Colonic mucosa (tissue), 4 donors: ENCODE measurements at regions of chr14 and their contacts with region 1.

Region 1: DNA sequence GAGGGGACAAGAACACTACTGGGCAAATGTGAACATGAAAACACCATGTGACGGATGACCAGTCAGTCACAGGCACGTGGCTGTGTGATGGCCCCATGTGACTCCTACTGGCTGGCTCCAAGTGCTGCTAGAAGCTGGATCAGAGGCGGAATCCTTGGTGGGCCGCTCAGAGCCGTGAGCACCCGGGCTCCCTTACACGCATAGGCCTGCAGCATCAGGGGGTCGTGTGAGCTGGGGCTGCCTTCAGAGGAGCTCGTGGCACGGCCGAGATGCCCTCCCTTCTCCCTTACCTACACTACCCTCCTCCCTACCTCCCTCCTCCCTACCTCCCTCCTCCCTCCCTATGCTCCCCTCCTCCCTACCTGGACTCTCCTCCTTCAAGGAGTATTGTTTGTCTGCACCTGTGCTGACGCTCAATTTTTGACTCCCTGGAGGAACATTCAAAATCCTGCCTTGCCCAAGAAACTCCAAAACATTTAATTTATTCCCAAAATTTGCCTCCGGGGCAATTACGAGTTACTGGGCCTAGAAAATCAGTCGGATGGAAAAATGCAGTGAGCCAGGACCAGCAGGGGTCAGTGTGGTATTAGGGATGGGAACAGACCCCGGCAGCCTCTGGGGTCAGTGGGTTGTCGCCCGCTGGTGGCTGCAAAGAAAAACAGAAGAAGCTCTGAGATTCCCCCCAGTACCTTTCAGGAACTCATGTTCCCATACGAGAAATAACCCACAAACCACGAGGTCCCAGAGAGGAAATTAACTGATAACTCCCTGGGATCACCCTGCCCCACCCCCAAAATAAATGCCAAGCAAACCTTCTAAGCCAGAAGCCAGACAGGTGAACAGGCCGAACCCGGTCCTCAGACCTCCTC is 61.2 kb downstream of the C14orf132 start:
- DNase-seq: peak; percentile 85
- H3K4me3 ChIP-seq: no peak overlapping the region
- H3K27ac ChIP-seq: no peak overlapping the region
- H3K4me1 ChIP-seq: no peaks in the 10 kb centered on the region
- H3K27me3 ChIP-seq: no peaks in the 10 kb centered on the region
- CTCF ChIP-seq: peak; percentile 77

Region 2: DNA sequence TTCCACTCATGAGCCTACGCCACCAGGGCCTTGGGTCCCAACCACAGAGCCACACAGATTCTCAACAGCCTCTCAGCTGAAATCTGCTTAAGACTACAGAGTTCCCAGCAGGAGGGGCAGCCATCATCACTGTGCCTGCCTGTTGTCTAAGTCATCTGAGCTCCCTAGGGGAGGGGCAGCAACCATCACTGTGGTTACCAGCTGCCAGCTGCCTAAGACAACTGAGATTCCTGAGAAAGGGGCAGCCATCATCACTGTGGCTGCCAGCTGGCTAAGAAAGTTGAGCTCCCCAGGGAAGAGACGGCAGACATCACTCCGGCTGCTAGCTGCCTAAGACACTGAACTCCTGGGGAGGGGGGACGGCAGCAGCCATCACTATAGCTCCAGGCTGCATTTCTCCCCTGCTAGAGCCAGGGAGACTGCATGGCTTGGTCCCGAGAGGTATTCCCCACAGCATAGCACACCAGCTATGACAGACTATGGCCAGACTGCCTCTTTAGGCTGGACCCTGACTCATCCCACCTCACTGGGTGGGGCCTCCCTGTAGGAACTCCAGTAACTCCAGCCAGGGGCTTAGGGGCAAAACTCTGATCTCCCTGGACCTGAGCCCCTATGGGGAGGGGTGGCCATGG is 98.4 kb before region 1 on chr14:
- intact Hi-C with region 1: loop called (anchors 2 kb)
- DNase-seq: no peak
- H3K4me3 ChIP-seq: no peak overlapping the region
- H3K27ac ChIP-seq: no peak overlapping the region
- H3K4me1 ChIP-seq: no peaks in the 10 kb centered on the region
- H3K27me3 ChIP-seq: no peaks in the 10 kb centered on the region
- CTCF ChIP-seq: no peak

Region 3: DNA sequence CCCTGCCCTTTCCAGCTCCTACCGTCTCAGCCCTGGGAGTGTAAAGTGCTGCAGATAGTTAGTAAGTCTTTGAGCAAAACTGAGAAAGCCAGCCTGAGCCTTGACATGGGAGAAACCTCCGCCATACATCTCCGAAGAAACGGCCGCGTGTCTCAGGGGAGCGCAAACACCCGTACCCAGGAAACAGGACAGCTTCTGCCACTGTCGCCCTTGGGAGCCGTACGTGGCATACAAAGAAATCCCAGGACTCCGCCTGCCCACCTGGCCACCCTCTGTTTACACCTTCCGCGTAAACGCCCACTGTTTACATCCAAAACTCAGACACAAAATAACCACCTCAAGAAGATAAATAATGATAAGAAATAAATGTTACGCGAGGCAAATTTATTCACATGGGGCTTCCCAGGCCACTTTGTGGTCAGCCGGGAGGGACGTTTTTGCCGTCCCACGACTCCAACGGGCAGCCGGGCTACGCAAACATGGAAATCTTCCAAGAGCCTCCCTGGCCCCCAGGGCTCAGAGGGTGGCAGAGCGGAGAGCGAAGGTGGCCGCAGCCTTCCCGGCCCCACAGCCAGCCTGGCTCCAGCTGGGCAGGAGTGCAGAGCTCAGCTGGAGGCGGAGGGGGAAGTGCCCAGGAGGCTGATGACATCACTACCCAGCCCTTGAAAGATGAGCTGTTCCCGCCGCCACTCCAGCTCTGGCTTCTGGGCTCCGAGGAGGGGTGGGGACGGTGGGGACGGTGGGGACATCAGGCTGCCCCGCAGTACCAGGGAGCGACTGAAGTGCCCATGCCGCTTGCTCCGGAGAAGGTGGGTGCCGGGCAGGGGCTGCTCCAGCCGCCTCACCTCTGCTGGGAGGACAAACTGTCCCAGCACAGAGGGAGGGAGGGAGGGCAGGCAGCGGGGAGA is 104.0 kb after region 1 on chr14 and contains the start of gene BDKRB2:
- intact Hi-C with region 1: loop called (anchors 10 kb)
- DNase-seq: peak; percentile 86
- H3K4me3 ChIP-seq: peak within 1 kb of the TSS; percentile 57
- H3K27ac ChIP-seq: peak within 1 kb of the TSS; percentile 85
- H3K4me1 ChIP-seq: no peaks in the 10 kb centered on the region
- H3K27me3 ChIP-seq: no peaks in the 10 kb centered on the region
- CTCF ChIP-seq: no peak
- total RNA-seq, gene BDKRB2: 11.3 to 23.3 TPM

Region 4: GRCh38 chr14:96275177-96276112 is 175.1 kb after region 1 on chr14:
- intact Hi-C with region 1: loop called (anchors 2 kb)
- DNase-seq: peak; percentile 80
- H3K4me3 ChIP-seq: no peak overlapping the region
- H3K27ac ChIP-seq: no peak overlapping the region
- H3K4me1 ChIP-seq: no peaks in the 10 kb centered on the region
- H3K27me3 ChIP-seq: no peaks in the 10 kb centered on the region
- CTCF ChIP-seq: peak; percentile 94

Region 5: DNA sequence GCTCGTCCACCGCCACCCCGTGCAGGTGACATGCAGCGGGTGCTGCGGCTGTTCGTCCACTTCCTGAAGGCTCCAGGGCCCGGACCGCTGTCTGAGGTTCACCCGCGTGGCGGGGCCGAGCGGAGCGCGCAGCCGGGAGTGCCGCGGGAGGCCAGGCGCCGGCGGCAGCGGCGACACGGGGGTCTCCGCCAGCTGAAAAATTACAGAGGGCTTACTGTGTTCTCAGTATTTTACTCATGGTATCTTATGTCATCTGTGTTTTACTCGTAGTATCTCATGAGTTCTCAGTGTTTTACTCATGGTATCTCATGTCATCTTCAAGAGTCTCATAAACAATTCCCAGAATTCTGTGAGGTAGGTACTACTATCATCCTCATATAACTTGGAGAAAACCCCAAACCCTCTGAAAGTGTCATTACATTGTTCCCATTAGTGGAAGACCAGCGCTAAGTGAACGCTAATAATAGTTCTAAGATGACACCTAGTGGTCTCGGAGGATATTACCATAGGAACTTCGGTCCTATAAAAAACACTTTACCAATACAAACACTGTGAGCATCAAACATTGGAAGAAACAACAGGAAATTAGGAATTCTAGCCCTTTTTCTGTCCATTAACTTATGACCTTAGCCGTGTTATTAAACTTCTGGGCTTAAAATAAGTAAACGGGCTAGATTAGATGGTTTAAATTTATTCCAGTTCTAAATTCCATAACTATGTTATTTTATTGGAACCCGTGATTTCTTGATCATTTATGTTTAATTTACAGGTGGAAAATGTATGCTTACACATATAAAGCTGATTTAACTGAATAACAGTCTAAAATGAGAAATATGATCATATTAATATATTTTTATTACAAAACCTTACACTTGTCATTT is 324.0 kb after region 1 on chr14:
- intact Hi-C with region 1: loop called (anchors 10 kb)
- DNase-seq: peak; percentile 45
- H3K4me3 ChIP-seq: peak overlapping the region; percentile 44
- H3K27ac ChIP-seq: no peak overlapping the region
- H3K4me1 ChIP-seq: no peaks in the 10 kb centered on the region
- H3K27me3 ChIP-seq: no peaks in the 10 kb centered on the region
- CTCF ChIP-seq: peak; percentile 73

Region 6: DNA sequence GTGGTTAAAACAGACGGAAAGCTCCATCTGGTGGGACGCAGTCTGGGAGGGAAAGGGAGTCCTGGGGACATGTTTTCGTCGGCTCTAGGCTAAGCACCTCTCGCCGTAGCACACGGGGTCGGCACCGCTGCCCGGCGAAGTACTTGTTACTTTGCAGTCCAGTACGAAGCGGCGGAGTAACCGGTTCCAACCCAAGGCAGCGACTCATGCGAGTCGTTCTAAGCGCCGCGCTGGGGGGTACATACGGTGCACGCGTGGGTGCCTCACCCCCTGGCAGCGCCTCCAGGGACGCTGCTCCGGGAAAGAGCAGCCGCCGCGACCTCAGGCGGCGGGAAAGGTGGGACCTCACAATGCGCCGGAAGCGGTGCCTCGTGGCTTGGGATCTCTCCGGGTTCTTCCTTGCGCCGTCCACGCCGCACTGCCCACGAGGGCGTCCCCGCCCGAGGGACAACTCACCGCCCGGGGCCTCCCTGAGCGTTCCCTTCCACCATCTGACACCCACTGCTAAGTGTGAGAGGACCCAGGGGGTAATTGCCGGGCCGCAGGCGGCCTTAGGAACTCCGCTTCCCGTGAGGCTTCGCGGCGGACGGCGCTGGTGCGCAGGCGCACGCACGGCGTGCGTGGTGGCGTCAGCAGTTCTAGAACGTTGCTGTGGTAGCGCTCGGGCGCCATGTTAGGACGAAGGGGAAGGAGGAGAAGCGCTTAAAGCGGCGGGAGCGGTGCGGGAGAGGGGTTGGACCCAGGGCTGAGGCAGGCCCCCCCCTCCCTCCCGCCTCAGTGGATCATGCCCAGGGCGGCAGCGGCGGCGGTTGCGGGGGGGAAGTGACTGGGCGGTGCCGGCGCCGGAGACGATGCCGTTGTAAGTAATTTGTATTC is 401.6 kb after region 1 on chr14 and contains the start of gene PAPOLA:
- intact Hi-C with region 1: loop called (anchors 5 kb)
- DNase-seq: peak; percentile 95
- H3K4me3 ChIP-seq: peak within 1 kb of the TSS; percentile 83
- H3K27ac ChIP-seq: peak within 1 kb of the TSS; percentile 92
- H3K4me1 ChIP-seq: peaks cover 10% of the 10 kb centered on the region
- H3K27me3 ChIP-seq: no peaks in the 10 kb centered on the region
- CTCF ChIP-seq: no peak
- total RNA-seq, gene PAPOLA: 176 to 196 TPM